ENCODE measurements at regions of chrX and their contacts with region 1.

Region 1: DNA sequence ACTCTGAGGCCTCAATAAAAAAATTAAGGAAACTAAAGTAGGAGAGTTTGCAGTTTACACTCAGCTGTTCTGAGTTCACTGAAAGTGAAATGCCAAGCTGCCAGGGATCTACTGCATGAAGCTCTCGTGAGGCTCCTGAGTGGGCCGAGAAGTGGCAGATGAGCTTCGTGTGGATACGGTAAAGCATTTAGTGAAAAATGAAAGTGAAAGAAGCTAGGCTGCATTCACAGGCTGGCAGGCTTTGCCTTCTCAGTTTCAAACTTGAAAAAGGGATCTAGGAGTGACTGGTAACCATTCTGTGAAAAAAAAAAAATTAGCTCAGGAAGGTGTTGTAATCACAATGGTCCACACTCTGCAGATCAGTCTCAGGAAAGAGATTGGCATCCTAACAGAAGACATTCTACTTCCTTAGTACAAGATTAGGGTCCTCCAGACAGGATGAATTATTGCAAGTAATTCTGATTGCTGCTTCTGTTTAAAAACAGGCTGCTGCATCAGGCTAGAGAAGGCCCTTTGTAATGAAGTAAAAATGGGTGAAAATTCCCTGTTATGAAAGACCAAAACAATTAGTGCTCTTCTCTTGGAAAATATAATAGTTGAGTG is 679.9 kb downstream of the RPA4 start:
- DNase-seq: peak; percentile 24 to 46 (median 28)
- H3K4me3 ChIP-seq: peak overlapping the region; percentile 10
- H3K27ac ChIP-seq: peak overlapping the region in 1 of 2 donors; percentile 43
- H3K4me1 ChIP-seq: peaks cover 5% of the 10 kb centered on the region
- H3K27me3 ChIP-seq: no peaks in the 10 kb centered on the region
- CTCF ChIP-seq: no peak
- EP300 ChIP-seq: no peak
- POLR2A ChIP-seq: no peak

Region 2: DNA sequence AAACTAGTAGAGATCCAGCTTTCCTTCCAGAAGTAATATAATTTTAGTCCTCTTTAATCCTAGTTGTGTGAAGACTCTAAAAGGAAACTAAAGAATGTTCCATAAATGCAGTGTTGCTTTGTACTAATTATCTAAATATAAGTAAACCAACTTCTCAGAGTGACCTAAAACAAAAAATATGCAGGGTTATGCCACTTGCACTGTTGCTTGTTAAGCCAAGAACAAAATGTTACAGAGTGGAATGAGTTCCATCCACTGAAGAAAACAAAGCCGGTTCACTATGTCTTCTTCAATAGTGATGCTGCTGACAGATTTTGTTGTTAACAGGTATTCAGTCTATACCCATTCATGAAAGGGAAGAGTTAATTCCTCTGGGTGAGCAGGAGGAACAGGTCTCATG is 1131.0 kb before region 1 on chrX:
- intact Hi-C with region 1: loop called in 1 of 4 experiments (anchors 5 kb)
- DNase-seq: no peak
- H3K4me3 ChIP-seq: no peak overlapping the region
- H3K27ac ChIP-seq: no peak overlapping the region
- H3K4me1 ChIP-seq: peaks cover 8% of the 10 kb centered on the region
- H3K27me3 ChIP-seq: no peaks in the 10 kb centered on the region
- CTCF ChIP-seq: no peak
- EP300 ChIP-seq: no peak
- POLR2A ChIP-seq: no peak

Region 3: DNA sequence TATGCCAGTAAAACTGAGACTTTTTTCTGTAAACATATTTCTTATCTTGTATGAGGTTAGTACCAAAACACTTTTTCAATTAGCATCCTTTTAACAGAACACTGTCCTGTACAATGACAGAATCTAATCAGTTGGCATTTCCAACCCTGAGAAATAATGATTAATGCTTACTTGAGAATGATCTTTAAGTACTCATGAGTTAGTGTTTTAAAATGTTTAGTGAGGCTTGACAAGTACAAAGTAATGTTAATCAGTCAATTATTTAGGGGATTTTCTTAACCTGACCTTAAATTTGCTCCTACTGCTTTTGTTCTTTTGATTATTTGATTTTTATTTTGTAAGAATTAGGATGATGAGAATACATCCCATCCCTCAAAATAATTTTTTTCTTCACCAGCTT is 183.4 kb before region 1 on chrX:
- intact Hi-C with region 1: no loop called
- DNase-seq: no peak
- H3K4me3 ChIP-seq: no peak overlapping the region
- H3K27ac ChIP-seq: no peak overlapping the region
- H3K4me1 ChIP-seq: no peaks in the 10 kb centered on the region
- H3K27me3 ChIP-seq: no peaks in the 10 kb centered on the region
- CTCF ChIP-seq: no peak
- EP300 ChIP-seq: no peak
- POLR2A ChIP-seq: no peak

Region 4: GRCh38 chrX:97743014-97743413 is 179.4 kb after region 1 on chrX:
- intact Hi-C with region 1: no loop called
- DNase-seq: no peak
- H3K4me3 ChIP-seq: no peak overlapping the region
- H3K27ac ChIP-seq: no peak overlapping the region
- H3K4me1 ChIP-seq: no peaks in the 10 kb centered on the region
- H3K27me3 ChIP-seq: no peaks in the 10 kb centered on the region
- CTCF ChIP-seq: no peak
- EP300 ChIP-seq: no peak
- POLR2A ChIP-seq: no peak

Region 5: GRCh38 chrX:99549381-99549780 is 1985.7 kb after region 1 on chrX:
- intact Hi-C with region 1: no loop called
- DNase-seq: no peak
- H3K4me3 ChIP-seq: no peak overlapping the region
- H3K27ac ChIP-seq: no peak overlapping the region
- H3K4me1 ChIP-seq: no peaks in the 10 kb centered on the region
- H3K27me3 ChIP-seq: no peaks in the 10 kb centered on the region
- CTCF ChIP-seq: no peak
- EP300 ChIP-seq: no peak
- POLR2A ChIP-seq: no peak